ENCODE measurements at regions of chr19 and their contacts with region 1.

Region 1: GRCh38 chr19:47697863-47698609 is 15.2 kb upstream of the EHD2 start:
- DNase-seq: peak; percentile 50 to 89 (median 74)
- ATAC-seq: peak; percentile 85 to 96 (median 94)
- H3K4me3 ChIP-seq: no peak overlapping the region
- H3K27ac ChIP-seq: no peak overlapping the region
- H3K4me1 ChIP-seq: no peaks in the 10 kb centered on the region
- H3K27me3 ChIP-seq: no peaks in the 10 kb centered on the region
- CTCF ChIP-seq: peak; percentile 64 to 95 (median 90)

Region 2: DNA sequence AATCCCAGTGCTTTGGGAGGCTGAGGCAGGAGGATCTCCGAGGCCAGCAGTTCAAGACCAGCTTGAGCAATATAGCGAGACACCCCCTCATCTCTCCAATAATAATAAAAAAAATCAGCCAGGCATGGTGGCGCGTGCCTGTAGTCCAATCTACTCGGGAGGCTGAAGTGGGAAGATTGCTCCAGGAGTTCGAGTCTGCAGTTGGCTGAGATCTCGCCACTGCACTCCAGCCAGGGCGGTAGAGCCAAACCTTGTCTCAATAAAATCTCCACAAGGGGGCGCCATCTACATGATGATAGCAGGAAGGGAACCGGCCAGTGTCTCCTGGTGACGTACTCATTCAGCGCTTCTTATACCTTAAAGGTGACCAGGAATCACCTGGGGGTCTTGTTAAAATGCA is 402.0 kb before region 1 on chr19:
- intact Hi-C with region 1: loop called in 1 of 3 experiments (anchors 10 kb)
- DNase-seq: peak in 4 of 6 donors; percentile 59 to 77 (median 72)
- ATAC-seq: peak; percentile 93 to 98 (median 94)
- H3K4me3 ChIP-seq: no peak overlapping the region
- H3K27ac ChIP-seq: no peak overlapping the region
- H3K4me1 ChIP-seq: no peaks in the 10 kb centered on the region
- H3K27me3 ChIP-seq: no peaks in the 10 kb centered on the region
- CTCF ChIP-seq: peak; percentile 55 to 75 (median 62)

Region 3: GRCh38 chr19:47436712-47437401 is 261.2 kb before region 1 on chr19:
- intact Hi-C with region 1: loop called (anchors 5 to 10 kb)
- DNase-seq: peak; percentile 66 to 93 (median 86)
- ATAC-seq: peak; percentile 87 to 100 (median 98)
- H3K4me3 ChIP-seq: no peak overlapping the region
- H3K27ac ChIP-seq: no peak overlapping the region
- H3K4me1 ChIP-seq: no peaks in the 10 kb centered on the region
- H3K27me3 ChIP-seq: peaks cover 0 to 4% (median 0%) of the 10 kb centered on the region in 4 donors
- CTCF ChIP-seq: peak; percentile 78 to 93 (median 86)

Region 4: DNA sequence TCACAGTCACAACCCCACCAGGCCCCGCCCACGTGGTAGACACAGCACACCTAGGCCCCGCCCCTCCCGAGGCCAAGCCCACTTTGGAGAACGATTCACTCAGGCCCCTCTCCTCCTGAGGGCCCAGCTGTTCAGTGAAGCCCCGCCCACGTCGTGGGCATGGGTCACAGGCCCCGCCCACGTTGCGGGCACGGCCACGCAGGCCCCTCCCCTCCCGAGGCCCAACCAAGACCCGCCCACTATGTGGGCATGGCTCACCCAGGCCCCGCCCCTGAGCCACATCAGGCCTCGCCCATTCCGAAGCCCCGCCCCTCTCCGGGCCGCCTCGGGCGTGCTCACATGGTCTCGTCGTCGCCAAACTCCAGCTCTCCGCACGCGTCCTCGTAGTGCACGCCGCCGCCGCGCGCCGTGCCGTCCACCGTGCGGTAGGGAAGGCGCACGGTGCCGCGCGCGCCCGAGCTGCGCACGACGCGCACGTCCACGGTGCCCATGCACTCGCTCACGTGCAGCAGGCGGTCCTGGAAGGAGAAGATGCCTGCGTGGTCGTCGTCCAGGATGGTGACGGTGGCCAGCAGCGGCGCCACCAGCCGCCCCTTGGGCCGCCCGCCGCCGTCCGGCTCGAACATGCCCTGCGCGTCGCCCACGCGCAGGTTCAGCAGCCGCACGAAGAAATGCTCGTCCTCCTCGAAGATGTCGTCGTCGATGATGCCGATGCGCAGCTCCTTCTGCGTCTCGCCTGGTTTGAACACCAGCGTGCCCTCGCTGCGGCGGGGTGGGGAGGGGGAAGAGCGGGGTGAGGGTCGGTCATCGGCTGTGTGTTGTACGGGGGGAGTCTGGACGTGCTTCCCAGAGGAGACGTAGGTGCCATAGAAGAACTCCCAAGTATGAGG is 250.3 kb before region 1 on chr19:
- intact Hi-C with region 1: loop called in 1 of 3 experiments (anchors 10 kb)
- DNase-seq: peak in 3 of 6 donors; percentile 54 to 68 (median 66)
- ATAC-seq: peak in 3 of 4 donors; percentile 33 to 61 (median 52)
- H3K4me3 ChIP-seq: no peak overlapping the region
- H3K27ac ChIP-seq: no peak overlapping the region
- H3K4me1 ChIP-seq: no peaks in the 10 kb centered on the region
- H3K27me3 ChIP-seq: no peaks in the 10 kb centered on the region
- CTCF ChIP-seq: no peak

Region 5: DNA sequence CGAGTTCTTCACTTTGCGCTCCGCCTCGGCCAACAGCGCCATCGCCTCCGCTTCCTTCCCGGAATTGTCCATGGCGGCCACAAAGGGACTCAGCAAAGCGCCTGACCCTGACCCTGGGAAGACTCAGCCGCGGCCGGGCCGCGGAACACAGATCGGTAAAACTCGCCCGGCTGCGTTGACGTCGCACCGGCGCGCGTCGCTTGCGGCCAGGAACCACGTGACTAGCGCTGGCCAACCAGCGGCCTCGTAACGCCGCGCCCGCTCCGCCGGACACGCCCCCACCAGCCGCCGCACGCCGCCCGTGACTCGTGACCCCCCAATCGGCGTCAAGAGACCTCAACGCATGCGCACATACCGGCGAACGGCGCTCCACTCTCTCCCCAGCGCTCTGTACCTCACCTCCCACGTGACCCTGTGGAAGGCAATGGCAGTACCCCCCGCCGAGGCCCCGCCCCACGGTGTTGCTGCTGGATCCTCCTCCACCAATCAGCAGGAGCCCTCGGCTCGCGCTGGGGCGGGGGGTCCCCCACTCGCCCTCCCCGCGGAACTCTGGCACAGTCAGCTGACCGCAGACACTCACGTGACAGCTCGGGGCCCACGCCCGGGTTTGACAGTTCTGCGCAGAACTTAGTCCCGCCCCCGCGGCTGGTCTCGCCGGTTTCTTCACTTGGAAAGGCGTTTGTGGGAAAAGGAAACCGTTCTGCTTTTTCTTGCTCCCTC is 183.0 kb before region 1 on chr19 and contains the start of gene NAPA:
- intact Hi-C with region 1: loop called in 2 of 3 experiments (anchors 5 kb)
- DNase-seq: peak; percentile 99 to 100 (median 100)
- ATAC-seq: peak; percentile 89 to 94 (median 90)
- H3K4me3 ChIP-seq: peak within 1 kb of the TSS; percentile 80 to 95 (median 92)
- H3K27ac ChIP-seq: peak within 1 kb of the TSS; percentile 92 to 97 (median 94)
- H3K4me1 ChIP-seq: peaks cover 19 to 30% (median 29%) of the 10 kb centered on the region in 3 donors
- H3K27me3 ChIP-seq: no peaks in the 10 kb centered on the region
- CTCF ChIP-seq: no peak
- total RNA-seq, gene NAPA: 47.2 to 63.5 (median 53.2) TPM

Region 6: GRCh38 chr19:47523473-47523872 is 174.6 kb before region 1 on chr19:
- intact Hi-C with region 1: loop called in 2 of 3 experiments (anchors 5 kb)
- DNase-seq: no peak
- ATAC-seq: no peak
- H3K4me3 ChIP-seq: no peak overlapping the region
- H3K27ac ChIP-seq: no peak overlapping the region
- H3K4me1 ChIP-seq: no peaks in the 10 kb centered on the region
- H3K27me3 ChIP-seq: no peaks in the 10 kb centered on the region
- CTCF ChIP-seq: no peak

Measured in pancreas (tissue), 10 donors.